Naive thymus-derived CD4-positive, alpha-beta T cell (primary cell): ENCODE measurements at regions of chr1 and their contacts with region 1.

Region 1: DNA sequence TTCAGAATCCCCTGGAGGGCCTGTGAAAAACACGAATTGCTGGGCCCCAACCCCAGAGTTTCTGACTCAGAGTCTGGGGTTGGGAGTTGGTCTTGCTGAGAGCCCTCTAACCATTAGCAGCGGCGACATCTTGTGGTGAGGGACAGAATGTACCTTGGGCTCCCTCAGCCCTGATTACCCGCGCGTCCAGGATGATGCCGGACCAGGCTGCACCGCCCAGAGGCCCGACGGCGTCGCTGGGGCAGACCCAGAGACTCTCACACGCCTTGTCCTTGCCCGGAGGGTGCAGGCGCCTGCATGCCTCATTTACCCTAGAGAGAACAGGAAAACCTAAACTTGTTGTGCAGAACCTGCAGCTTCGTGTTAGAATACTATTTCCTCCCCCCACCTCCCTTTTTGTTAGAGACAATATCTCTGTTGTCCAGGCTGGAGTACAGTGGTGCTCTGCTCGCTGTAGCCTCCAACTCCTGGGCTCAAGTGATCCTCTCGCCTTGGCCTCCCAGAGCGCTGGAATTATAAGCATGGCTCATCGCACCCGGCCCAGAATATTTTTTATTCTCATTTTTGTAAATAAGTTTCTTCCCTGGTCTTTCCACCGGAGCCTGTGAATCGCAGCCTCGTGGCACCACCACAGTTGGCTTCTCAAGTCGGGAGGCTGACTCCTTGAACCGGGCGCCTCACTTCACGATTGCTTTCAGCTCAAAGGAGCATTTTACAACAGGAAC is 22.2 kb upstream of the RD3 start:
- DNase-seq: peak; percentile 16 to 71 (median 46)
- ATAC-seq: peak; percentile 80
- H3K4me3 ChIP-seq: no peak overlapping the region
- H3K4me3 Mint-ChIP-seq: peak overlapping the region; percentile 61 to 84 (median 73)
- H3K27ac ChIP-seq: no peak overlapping the region
- H3K27ac Mint-ChIP-seq: peak overlapping the region in 2 of 9 donors; percentile 46 to 63
- H3K4me1 ChIP-seq: peaks cover 10 to 11% of the 10 kb centered on the region in 2 donors
- H3K4me1 Mint-ChIP-seq: peaks cover 5 to 35% (median 20%) of the 10 kb centered on the region in 7 donors
- H3K27me3 ChIP-seq: no peaks in the 10 kb centered on the region
- H3K27me3 Mint-ChIP-seq: peaks cover 0 to 12% (median 5%) of the 10 kb centered on the region in 5 donors

Region 2: DNA sequence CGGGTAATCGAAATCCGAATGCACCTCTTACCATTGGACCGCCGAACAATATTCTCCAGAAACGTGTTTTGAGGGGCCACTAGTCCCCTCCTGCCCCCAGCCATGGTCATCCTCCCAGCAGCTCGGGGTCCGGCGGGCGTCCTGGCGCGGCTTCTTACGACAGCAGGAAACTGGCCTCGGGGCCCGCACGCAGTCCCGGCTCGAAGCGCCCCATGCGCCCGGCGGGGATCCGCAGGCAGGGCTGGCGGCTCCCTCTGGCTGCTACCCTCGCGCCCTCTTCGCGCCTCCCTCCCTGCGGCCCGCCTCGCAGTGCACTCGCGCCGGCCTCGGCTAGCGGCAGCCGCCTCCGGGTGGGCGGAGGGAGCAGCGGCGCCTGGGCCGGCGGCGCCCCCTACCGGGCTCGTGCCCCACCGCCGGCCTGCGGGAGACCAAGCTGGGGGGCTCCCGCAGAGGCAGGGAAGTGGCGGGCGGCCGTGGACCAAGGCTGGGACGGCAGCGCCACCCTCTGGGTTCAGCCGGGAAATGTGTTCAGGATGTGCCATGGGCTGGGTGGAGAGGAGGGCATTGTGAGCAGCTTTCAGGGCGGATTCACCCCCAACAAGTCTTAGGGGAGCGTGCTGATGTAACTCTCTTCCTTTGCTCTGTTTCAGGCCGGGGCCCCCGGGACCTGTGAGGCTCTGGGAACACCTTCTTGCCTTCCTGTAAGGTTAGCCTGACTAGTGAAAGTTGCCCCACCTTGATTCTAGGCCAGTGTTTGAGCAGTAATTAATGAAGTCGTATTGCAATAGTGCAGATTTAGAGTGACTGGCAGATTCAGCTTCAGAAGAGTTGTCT is 380.1 kb before region 1 on chr1 and contains the start of gene KCNH1:
- CTCF ChIA-PET with region 1: no interaction called
- POLR2A ChIA-PET with region 1: no interaction called
- intact Hi-C with region 1: loop called in 1 of 2 experiments (anchors 1 kb)
- DNase-seq: peak; percentile 55 to 81 (median 71)
- ATAC-seq: peak; percentile 93
- H3K4me3 ChIP-seq: peak within 1 kb of the TSS; percentile 50
- H3K4me3 Mint-ChIP-seq: peak within 1 kb of the TSS; percentile 65 to 88 (median 78)
- H3K27ac ChIP-seq: no peak within 1 kb of the TSS
- H3K27ac Mint-ChIP-seq: no peak within 1 kb of the TSS
- H3K4me1 ChIP-seq: peaks cover 3 to 5% of the 10 kb centered on the region in 2 donors
- H3K4me1 Mint-ChIP-seq: peaks cover 0 to 10% (median 7%) of the 10 kb centered on the region in 7 donors
- H3K27me3 ChIP-seq: peaks cover 0 to 6% of the 10 kb centered on the region in 2 donors
- H3K27me3 Mint-ChIP-seq: peaks cover 19 to 89% (median 64%) of the 10 kb centered on the region in 5 donors
- total RNA-seq, gene KCNH1: not detected

Region 3: GRCh38 chr1:211415700-211416099 is 98.5 kb before region 1 on chr1:
- CTCF ChIA-PET with region 1: no interaction called
- POLR2A ChIA-PET with region 1: no interaction called
- intact Hi-C with region 1: loop called in 1 of 2 experiments (anchors 10 kb)
- DNase-seq: no peak
- ATAC-seq: no peak
- H3K4me3 ChIP-seq: no peak overlapping the region
- H3K4me3 Mint-ChIP-seq: peak overlapping the region; percentile 23 to 85 (median 70)
- H3K27ac ChIP-seq: no peak overlapping the region
- H3K27ac Mint-ChIP-seq: peak overlapping the region in 5 of 9 donors; percentile 7 to 75 (median 49)
- H3K4me1 ChIP-seq: peaks cover 0 to 6% of the 10 kb centered on the region in 2 donors
- H3K4me1 Mint-ChIP-seq: peaks cover 1 to 20% (median 15%) of the 10 kb centered on the region in 7 donors
- H3K27me3 ChIP-seq: no peaks in the 10 kb centered on the region
- H3K27me3 Mint-ChIP-seq: peaks cover 0 to 9% (median 0%) of the 10 kb centered on the region in 5 donors

Region 4: DNA sequence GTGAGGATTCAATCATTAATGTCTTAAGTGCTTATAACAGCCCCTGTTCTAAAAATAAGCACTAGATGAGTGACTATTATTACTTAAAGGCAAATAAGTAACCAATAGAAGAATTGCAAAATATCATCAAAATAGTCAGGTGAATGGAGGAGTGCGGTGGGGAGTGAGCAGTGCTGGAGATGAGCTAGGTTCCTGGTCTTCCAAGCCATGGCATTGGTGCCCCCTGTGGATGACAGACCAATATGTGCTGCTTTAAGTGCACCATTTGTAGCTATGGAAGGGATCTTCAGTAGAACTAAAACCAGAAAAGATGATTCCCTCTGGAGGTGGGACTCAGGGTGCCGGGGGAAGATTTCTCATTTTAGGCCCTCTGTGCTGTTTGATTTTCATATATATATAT is 110.8 kb after region 1 on chr1:
- CTCF ChIA-PET with region 1: interaction called, 3 read pairs
- POLR2A ChIA-PET with region 1: no interaction called
- intact Hi-C with region 1: loop called (anchors 1 kb)
- DNase-seq: peak in 5 of 9 donors; percentile 11 to 35 (median 27)
- ATAC-seq: peak; percentile 91
- H3K4me3 ChIP-seq: no peak overlapping the region
- H3K4me3 Mint-ChIP-seq: no peak overlapping the region
- H3K27ac ChIP-seq: no peak overlapping the region
- H3K27ac Mint-ChIP-seq: no peak overlapping the region
- H3K4me1 ChIP-seq: no peaks in the 10 kb centered on the region
- H3K4me1 Mint-ChIP-seq: peaks cover 3 to 24% (median 9%) of the 10 kb centered on the region in 7 donors
- H3K27me3 ChIP-seq: no peaks in the 10 kb centered on the region
- H3K27me3 Mint-ChIP-seq: peaks cover 0 to 15% (median 0%) of the 10 kb centered on the region in 5 donors